ENCODE measurements at regions of chr16 and their contacts with region 1.

Region 1: DNA sequence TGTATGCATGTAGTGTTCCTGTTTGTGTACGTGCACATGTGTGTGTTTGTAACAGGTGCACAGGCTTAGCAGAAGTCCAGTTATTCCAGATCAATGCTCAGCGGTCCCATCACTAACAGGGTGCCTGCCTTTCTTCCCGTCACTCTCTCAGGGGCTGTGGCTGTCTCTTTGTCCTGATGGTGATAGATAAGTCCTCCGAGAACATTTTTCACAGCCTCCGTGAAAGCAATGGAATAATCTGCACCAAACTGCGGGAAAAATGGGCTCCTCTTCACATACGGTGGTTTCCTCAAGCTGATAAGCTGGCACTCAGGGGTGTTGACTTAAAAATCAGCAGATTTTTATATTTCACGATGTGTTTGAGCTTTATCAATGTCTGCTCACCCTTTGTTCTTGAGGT is 342.3 kb downstream of the TMEM114 start:
- DNase-seq: no peak
- ATAC-seq: no peak
- H3K4me3 ChIP-seq: no peak overlapping the region
- H3K27ac ChIP-seq: no peak overlapping the region
- H3K4me1 ChIP-seq: no peaks in the 10 kb centered on the region
- H3K27me3 ChIP-seq: peaks cover 0 to 10% (median 0%) of the 10 kb centered on the region in 9 donors
- CTCF ChIP-seq: no peak
- POLR2A ChIP-seq: no peak

Region 2: GRCh38 chr16:8194794-8195193 is 53.2 kb before region 1 on chr16:
- intact Hi-C with region 1: loop called in 1 of 10 experiments (anchors 5 kb)
- DNase-seq: no peak
- ATAC-seq: no peak
- H3K4me3 ChIP-seq: no peak overlapping the region
- H3K27ac ChIP-seq: no peak overlapping the region
- H3K4me1 ChIP-seq: no peaks in the 10 kb centered on the region
- H3K27me3 ChIP-seq: no peaks in the 10 kb centered on the region
- CTCF ChIP-seq: peak in 3 of 12 donors; percentile 19 to 36 (median 31)
- POLR2A ChIP-seq: no peak